ENCODE measurements at regions of chr19 and their contacts with region 1.

Region 1: DNA sequence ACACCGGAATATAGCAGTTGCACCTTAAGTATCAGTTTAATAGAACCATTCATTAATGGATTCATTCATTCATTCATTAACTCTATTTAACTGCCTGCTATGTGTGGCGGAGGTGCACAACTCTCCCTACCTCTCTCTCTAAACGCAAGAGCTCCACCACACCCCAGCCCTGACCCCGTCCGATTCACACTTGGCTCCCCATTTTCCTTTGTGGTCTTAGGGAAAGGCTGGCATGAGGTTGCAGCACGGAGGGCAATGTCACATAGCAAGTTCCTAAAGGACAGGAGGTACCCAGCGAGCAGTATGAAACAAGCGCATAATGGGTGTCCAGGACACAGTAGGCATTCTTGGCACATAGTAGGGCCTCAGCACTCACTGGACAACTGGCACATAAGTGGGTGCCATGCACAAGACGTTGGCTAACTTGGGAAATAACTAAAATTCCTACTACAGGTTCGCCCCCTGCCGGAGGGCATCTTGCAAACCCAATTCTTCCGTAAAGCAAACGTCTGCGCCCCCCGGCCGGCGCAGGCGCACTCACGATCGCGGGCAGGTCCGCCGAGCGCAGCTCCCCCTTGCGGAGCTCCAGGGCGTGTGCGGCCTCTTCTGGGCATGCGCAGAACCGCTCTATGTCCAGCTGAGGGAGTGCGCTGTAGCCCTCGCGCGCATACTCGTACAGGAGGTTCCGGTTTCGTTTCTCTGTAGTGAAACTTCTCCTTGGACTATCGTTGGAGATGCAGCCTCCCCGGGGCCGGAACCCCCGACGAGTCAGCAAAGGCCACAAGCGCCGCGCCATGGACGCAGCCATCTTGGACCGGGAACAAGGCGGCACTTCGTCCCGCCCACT is at the start of gene SARS2:
- DNase-seq: peak; percentile 95
- H3K4me3 ChIP-seq: peak within 1 kb of the TSS; percentile 85
- H3K4me3 Mint-ChIP-seq: peak within 1 kb of the TSS; percentile 77
- H3K27ac Mint-ChIP-seq: peak within 1 kb of the TSS; percentile 99
- H3K4me1 ChIP-seq: 0 out of 2 replicates have a peak, but pooled peaks cover 5% of the 10 kb centered on the region
- H3K4me1 Mint-ChIP-seq: no peaks in the 10 kb centered on the region
- H3K27me3 ChIP-seq: no peaks in the 10 kb centered on the region
- H3K27me3 Mint-ChIP-seq: no peaks in the 10 kb centered on the region
- CTCF ChIP-seq: peak; percentile 98 to 99
- total RNA-seq, gene SARS2: 66.6 and 85.1 TPM in 2 replicates

Region 2: GRCh38 chr19:38736413-38737280 is 193.5 kb before region 1 on chr19:
- CTCF ChIA-PET with region 1: interaction called, 6 read pairs
- POLR2A ChIA-PET with region 1: no interaction called
- intact Hi-C with region 1: loop called (anchors 1 kb)
- DNase-seq: peak; percentile 91 to 95
- H3K4me3 ChIP-seq: peak overlapping the region; percentile 54
- H3K4me3 Mint-ChIP-seq: peak overlapping the region; percentile 72
- H3K27ac Mint-ChIP-seq: peak overlapping the region; percentile 55
- H3K4me1 ChIP-seq: peaks cover 24% of the 10 kb centered on the region
- H3K4me1 Mint-ChIP-seq: peaks cover 23% of the 10 kb centered on the region
- H3K27me3 ChIP-seq: no peaks in the 10 kb centered on the region
- H3K27me3 Mint-ChIP-seq: no peaks in the 10 kb centered on the region
- CTCF ChIP-seq: no peak

Region 3: GRCh38 chr19:38849860-38850435 is 80.2 kb before region 1 on chr19 and contains the start of gene HNRNPL:
- CTCF ChIA-PET with region 1: interaction called, 12 read pairs
- POLR2A ChIA-PET with region 1: interaction called, 14 read pairs
- intact Hi-C with region 1: loop called (anchors 1 kb)
- DNase-seq: peak; percentile 100
- H3K4me3 ChIP-seq: peak within 1 kb of the TSS; percentile 66
- H3K4me3 Mint-ChIP-seq: peak within 1 kb of the TSS; percentile 98
- H3K27ac Mint-ChIP-seq: peak within 1 kb of the TSS; percentile 99
- H3K4me1 ChIP-seq: peaks cover 10% of the 10 kb centered on the region; the same call in 1 of the 2 replicates
- H3K4me1 Mint-ChIP-seq: peaks cover 16% of the 10 kb centered on the region
- H3K27me3 ChIP-seq: no peaks in the 10 kb centered on the region
- H3K27me3 Mint-ChIP-seq: no peaks in the 10 kb centered on the region
- CTCF ChIP-seq: peak; percentile 55 to 59
- total RNA-seq, gene HNRNPL: 443 and 446 TPM in 2 replicates

Region 4: GRCh38 chr19:38899447-38900219 is 30.5 kb before region 1 on chr19 and contains the starts of genes NFKBIB and SIRT2:
- CTCF ChIA-PET with region 1: interaction called, 24 read pairs
- POLR2A ChIA-PET with region 1: interaction called, 21 read pairs
- intact Hi-C with region 1: loop called (anchors 1 kb)
- DNase-seq: peak; percentile 99 to 100
- H3K4me3 ChIP-seq: peak within 1 kb of the TSS; percentile 82
- H3K4me3 Mint-ChIP-seq: peak within 1 kb of the TSS; percentile 75
- H3K27ac Mint-ChIP-seq: peak within 1 kb of the TSS; percentile 69
- H3K4me1 ChIP-seq: peaks cover 18% of the 10 kb centered on the region
- H3K4me1 Mint-ChIP-seq: peaks cover 24% of the 10 kb centered on the region
- H3K27me3 ChIP-seq: no peaks in the 10 kb centered on the region
- H3K27me3 Mint-ChIP-seq: no peaks in the 10 kb centered on the region
- CTCF ChIP-seq: no peak
- total RNA-seq, gene NFKBIB: 43.9 and 52.6 TPM in 2 replicates
- total RNA-seq, gene SIRT2: 33.3 and 34.4 TPM in 2 replicates

Region 5: DNA sequence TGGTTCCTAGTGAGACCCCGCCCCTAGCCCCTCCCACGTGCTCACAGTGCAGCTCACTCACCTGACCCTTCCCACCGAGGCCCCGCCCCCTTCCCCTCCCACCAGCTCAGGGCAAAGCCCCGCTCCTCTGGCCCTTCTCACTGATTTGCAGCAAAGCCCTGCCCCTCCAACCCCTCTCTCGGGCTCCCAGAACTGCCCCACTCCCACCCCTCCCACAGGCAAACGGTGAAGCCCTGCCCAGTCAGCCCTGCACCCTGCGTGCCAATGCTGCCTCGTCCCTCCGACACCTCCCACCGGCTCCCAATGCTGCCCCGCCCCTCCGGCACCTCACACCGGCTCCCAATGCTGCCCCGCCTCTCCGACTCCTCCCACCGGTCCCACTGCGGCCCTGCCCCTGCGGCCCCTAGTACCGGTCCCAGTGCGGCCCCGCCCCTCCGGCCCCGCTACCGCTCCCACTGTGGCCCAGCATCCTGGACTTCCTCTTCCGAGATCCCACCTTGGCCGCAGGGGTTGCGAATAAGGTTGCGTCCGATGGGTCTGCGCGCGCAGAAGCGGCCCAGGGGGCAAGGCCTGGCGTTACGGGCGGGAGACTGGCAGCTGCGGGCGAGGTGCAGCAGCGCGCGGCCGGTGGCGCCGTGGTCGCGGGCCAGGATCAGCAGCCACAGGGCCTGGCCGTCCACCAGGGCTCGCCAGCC is 101.4 kb after region 1 on chr19:
- CTCF ChIA-PET with region 1: interaction called, 4 read pairs
- POLR2A ChIA-PET with region 1: interaction called, 10 read pairs
- intact Hi-C with region 1: no loop called
- DNase-seq: peak; percentile 98 to 99
- H3K4me3 ChIP-seq: peak overlapping the region; percentile 76
- H3K4me3 Mint-ChIP-seq: peak overlapping the region; percentile 83
- H3K27ac Mint-ChIP-seq: peak overlapping the region; percentile 85
- H3K4me1 ChIP-seq: peaks cover 19% of the 10 kb centered on the region
- H3K4me1 Mint-ChIP-seq: peaks cover under 1% of the 10 kb centered on the region
- H3K27me3 ChIP-seq: no peaks in the 10 kb centered on the region
- H3K27me3 Mint-ChIP-seq: no peaks in the 10 kb centered on the region
- CTCF ChIP-seq: no peak

Region 6: GRCh38 chr19:39212375-39212742 is 282.2 kb after region 1 on chr19:
- CTCF ChIA-PET with region 1: no interaction called
- POLR2A ChIA-PET with region 1: no interaction called
- intact Hi-C with region 1: no loop called
- DNase-seq: peak; percentile 48 to 67
- H3K4me3 ChIP-seq: no peak overlapping the region
- H3K4me3 Mint-ChIP-seq: no peak overlapping the region
- H3K27ac Mint-ChIP-seq: no peak overlapping the region
- H3K4me1 ChIP-seq: no peaks in the 10 kb centered on the region; the same call in 1 of the 2 replicates
- H3K4me1 Mint-ChIP-seq: no peaks in the 10 kb centered on the region
- H3K27me3 ChIP-seq: no peaks in the 10 kb centered on the region
- H3K27me3 Mint-ChIP-seq: no peaks in the 10 kb centered on the region
- CTCF ChIP-seq: peak; percentile 39 to 46

Measured in Caco-2 (cell line).